ENCODE measurements at regions of chr18 and their contacts with region 1.

Region 1: DNA sequence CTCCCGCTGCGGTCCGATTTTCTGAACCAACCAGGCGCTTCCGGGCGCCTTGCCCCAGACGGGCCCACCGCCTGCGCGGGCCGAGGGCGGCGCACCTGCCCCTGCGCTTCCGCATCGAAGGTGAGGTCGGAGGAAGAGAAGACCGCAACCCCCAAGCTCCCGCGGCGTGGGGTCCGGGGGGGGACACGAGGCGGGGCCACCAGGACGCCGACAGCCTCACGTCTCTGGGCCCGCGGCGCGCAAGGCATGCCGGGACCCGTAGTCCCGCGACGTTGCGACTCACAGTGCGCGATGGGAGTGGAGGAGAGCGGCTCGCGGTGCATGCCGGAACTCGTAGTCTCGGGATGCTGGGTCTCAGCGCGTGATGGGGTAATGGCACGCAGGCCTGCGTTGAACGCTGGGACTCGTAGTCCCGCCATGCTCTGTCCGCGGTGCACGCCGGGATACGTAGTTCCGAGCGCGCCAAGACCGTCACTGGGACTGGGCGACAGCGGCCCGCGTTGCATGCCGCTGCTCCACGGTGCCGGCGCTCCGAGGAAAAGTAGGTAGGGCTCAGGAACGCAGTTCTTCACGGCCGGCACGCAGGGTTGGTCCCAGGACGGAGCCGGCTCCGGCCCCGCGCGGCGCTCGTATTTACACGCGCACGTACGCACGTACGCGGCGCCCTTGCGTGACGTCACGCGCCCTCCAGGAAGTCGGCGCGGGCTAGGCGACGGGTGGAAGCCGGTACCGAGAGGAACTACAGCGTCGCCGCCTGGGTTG is at the start of gene CTDP1:
- DNase-seq: peak; percentile 100
- ATAC-seq: peak; percentile 90
- H3K4me3 ChIP-seq: peak within 1 kb of the TSS; percentile 80 to 94 (median 89)
- H3K4me3 Mint-ChIP-seq: peak within 1 kb of the TSS; percentile 99
- H3K27ac ChIP-seq: peak within 1 kb of the TSS; percentile 94 to 99
- H3K27ac Mint-ChIP-seq: peak within 1 kb of the TSS; percentile 99
- H3K4me1 ChIP-seq: peaks cover 33 to 36% of the 10 kb centered on the region in 2 donors
- H3K4me1 Mint-ChIP-seq: peaks cover 46% of the 10 kb centered on the region
- H3K27me3 ChIP-seq: no peaks in the 10 kb centered on the region
- H3K27me3 Mint-ChIP-seq: no peaks in the 10 kb centered on the region
- CTCF ChIP-seq: no peak
- total RNA-seq, gene CTDP1: 33.3 and 37.4 TPM in 2 replicates

Region 2: GRCh38 chr18:79393635-79394533 is 285.4 kb before region 1 on chr18:
- CTCF ChIA-PET with region 1: no interaction called
- POLR2A ChIA-PET with region 1: no interaction called
- intact Hi-C with region 1: loop called (anchors 1 kb)
- DNase-seq: peak; percentile 65
- ATAC-seq: peak; percentile 18
- H3K4me3 ChIP-seq: peak overlapping the region in 4 of 5 experiments; percentile 42 to 78 (median 60)
- H3K4me3 Mint-ChIP-seq: peak overlapping the region; percentile 85
- H3K27ac ChIP-seq: peak overlapping the region; percentile 49 to 66
- H3K27ac Mint-ChIP-seq: peak overlapping the region; percentile 74
- H3K4me1 ChIP-seq: peaks cover 38 to 45% of the 10 kb centered on the region in 2 donors
- H3K4me1 Mint-ChIP-seq: peaks cover 36% of the 10 kb centered on the region
- H3K27me3 ChIP-seq: peaks cover 0 to 3% (median 0%) of the 10 kb centered on the region in 4 experiments
- H3K27me3 Mint-ChIP-seq: no peaks in the 10 kb centered on the region
- CTCF ChIP-seq: no peak

Region 3: GRCh38 chr18:79405781-79406575 is 273.3 kb before region 1 on chr18:
- CTCF ChIA-PET with region 1: no interaction called
- POLR2A ChIA-PET with region 1: no interaction called
- intact Hi-C with region 1: loop called (anchors 2 kb)
- DNase-seq: peak; percentile 96
- ATAC-seq: peak; percentile 89
- H3K4me3 ChIP-seq: peak overlapping the region; percentile 19 to 45 (median 35)
- H3K4me3 Mint-ChIP-seq: peak overlapping the region; percentile 79
- H3K27ac ChIP-seq: peak overlapping the region; percentile 91 to 97
- H3K27ac Mint-ChIP-seq: peak overlapping the region; percentile 92
- H3K4me1 ChIP-seq: peaks cover 60 to 63% of the 10 kb centered on the region in 2 donors
- H3K4me1 Mint-ChIP-seq: peaks cover 71% of the 10 kb centered on the region
- H3K27me3 ChIP-seq: no peaks in the 10 kb centered on the region
- H3K27me3 Mint-ChIP-seq: no peaks in the 10 kb centered on the region
- CTCF ChIP-seq: no peak

Region 4: DNA sequence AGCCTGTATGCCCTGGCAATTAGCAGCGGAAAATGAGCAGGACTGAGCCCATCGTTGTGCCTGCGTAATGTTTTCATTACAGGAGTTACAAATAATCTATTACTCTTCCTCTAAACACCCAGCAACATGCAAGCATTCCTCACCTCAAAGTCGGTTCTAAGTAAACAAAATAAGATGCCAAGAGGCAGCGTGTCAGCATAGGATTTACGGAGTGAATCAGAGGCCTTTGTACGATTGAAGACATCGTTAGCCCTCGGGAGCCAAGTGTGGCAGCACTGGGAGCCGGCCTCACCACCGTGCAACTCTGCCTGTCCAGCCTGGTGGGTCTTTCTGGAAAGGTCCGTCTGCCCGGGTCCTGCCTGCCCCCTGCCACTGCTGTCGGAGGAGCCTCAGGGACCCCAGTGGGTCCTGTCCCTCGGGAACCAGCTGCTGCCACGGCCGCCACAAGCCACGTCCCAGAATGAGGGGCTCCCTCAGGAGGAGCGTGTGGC is 79.8 kb before region 1 on chr18:
- CTCF ChIA-PET with region 1: no interaction called
- POLR2A ChIA-PET with region 1: no interaction called
- intact Hi-C with region 1: no loop called
- DNase-seq: no peak
- ATAC-seq: no peak
- H3K4me3 ChIP-seq: no peak overlapping the region
- H3K4me3 Mint-ChIP-seq: no peak overlapping the region
- H3K27ac ChIP-seq: no peak overlapping the region
- H3K27ac Mint-ChIP-seq: no peak overlapping the region
- H3K4me1 ChIP-seq: no peaks in the 10 kb centered on the region
- H3K4me1 Mint-ChIP-seq: no peaks in the 10 kb centered on the region
- H3K27me3 ChIP-seq: no peaks in the 10 kb centered on the region
- H3K27me3 Mint-ChIP-seq: no peaks in the 10 kb centered on the region
- CTCF ChIP-seq: no peak

Region 5: GRCh38 chr18:79644006-79644665 is 35.2 kb before region 1 on chr18:
- CTCF ChIA-PET with region 1: interaction called, 5 read pairs
- POLR2A ChIA-PET with region 1: no interaction called
- intact Hi-C with region 1: loop called (anchors 1 kb)
- DNase-seq: peak; percentile 82
- ATAC-seq: peak; percentile 94
- H3K4me3 ChIP-seq: no peak overlapping the region
- H3K4me3 Mint-ChIP-seq: no peak overlapping the region
- H3K27ac ChIP-seq: no peak overlapping the region
- H3K27ac Mint-ChIP-seq: peak overlapping the region; percentile 15
- H3K4me1 ChIP-seq: peaks cover 15 to 22% of the 10 kb centered on the region in 2 donors
- H3K4me1 Mint-ChIP-seq: peaks cover 20% of the 10 kb centered on the region
- H3K27me3 ChIP-seq: no peaks in the 10 kb centered on the region
- H3K27me3 Mint-ChIP-seq: no peaks in the 10 kb centered on the region
- CTCF ChIP-seq: peak; percentile 99

Region 6: GRCh38 chr18:79819968-79820351 is 140.7 kb after region 1 on chr18:
- CTCF ChIA-PET with region 1: no interaction called
- POLR2A ChIA-PET with region 1: no interaction called
- intact Hi-C with region 1: loop called (anchors 2 kb)
- DNase-seq: peak; percentile 87
- ATAC-seq: peak; percentile 91
- H3K4me3 ChIP-seq: peak overlapping the region in 2 of 5 experiments; percentile 1 to 13
- H3K4me3 Mint-ChIP-seq: peak overlapping the region; percentile 85
- H3K27ac ChIP-seq: peak overlapping the region; percentile 35 to 63
- H3K27ac Mint-ChIP-seq: peak overlapping the region; percentile 85
- H3K4me1 ChIP-seq: peaks cover 44 to 45% of the 10 kb centered on the region in 2 donors
- H3K4me1 Mint-ChIP-seq: peaks cover 40% of the 10 kb centered on the region
- H3K27me3 ChIP-seq: no peaks in the 10 kb centered on the region
- H3K27me3 Mint-ChIP-seq: no peaks in the 10 kb centered on the region
- CTCF ChIP-seq: no peak

Region 7: GRCh38 chr18:79951578-79952455 is 272.5 kb after region 1 on chr18 and contains the start of gene SLC66A2:
- CTCF ChIA-PET with region 1: no interaction called
- POLR2A ChIA-PET with region 1: no interaction called
- intact Hi-C with region 1: loop called (anchors 1 kb)
- DNase-seq: peak; percentile 92
- ATAC-seq: peak; percentile 83
- H3K4me3 ChIP-seq: peak within 1 kb of the TSS; percentile 58 to 73 (median 70)
- H3K4me3 Mint-ChIP-seq: peak within 1 kb of the TSS; percentile 92
- H3K27ac ChIP-seq: peak within 1 kb of the TSS; percentile 54 to 83
- H3K27ac Mint-ChIP-seq: peak within 1 kb of the TSS; percentile 84
- H3K4me1 ChIP-seq: peaks cover 17 to 37% of the 10 kb centered on the region in 2 donors
- H3K4me1 Mint-ChIP-seq: peaks cover 34% of the 10 kb centered on the region
- H3K27me3 ChIP-seq: no peaks in the 10 kb centered on the region
- H3K27me3 Mint-ChIP-seq: no peaks in the 10 kb centered on the region
- CTCF ChIP-seq: no peak
- total RNA-seq, gene SLC66A2: 44.4 and 45.6 TPM in 2 replicates

Region 8: GRCh38 chr18:80157708-80158343 is 478.5 kb after region 1 on chr18:
- CTCF ChIA-PET with region 1: no interaction called
- POLR2A ChIA-PET with region 1: no interaction called
- intact Hi-C with region 1: loop called (anchors 2 kb)
- DNase-seq: peak; percentile 77
- ATAC-seq: peak; percentile 70
- H3K4me3 ChIP-seq: no peak overlapping the region
- H3K4me3 Mint-ChIP-seq: no peak overlapping the region
- H3K27ac ChIP-seq: no peak overlapping the region
- H3K27ac Mint-ChIP-seq: no peak overlapping the region
- H3K4me1 ChIP-seq: peaks cover 3% of the 10 kb centered on the region in 2 donors
- H3K4me1 Mint-ChIP-seq: peaks cover 12% of the 10 kb centered on the region
- H3K27me3 ChIP-seq: peaks cover 0 to 8% (median 2%) of the 10 kb centered on the region in 4 experiments
- H3K27me3 Mint-ChIP-seq: no peaks in the 10 kb centered on the region
- CTCF ChIP-seq: peak; percentile 100